ENCODE measurements at regions of chr6 and their contacts with region 1.

Region 1: GRCh38 chr6:139219271-139219729 is 72.5 kb downstream of the TXLNB start:
- DNase-seq: peak; percentile 75
- CTCF ChIP-seq: peak; percentile 89

Region 2: DNA sequence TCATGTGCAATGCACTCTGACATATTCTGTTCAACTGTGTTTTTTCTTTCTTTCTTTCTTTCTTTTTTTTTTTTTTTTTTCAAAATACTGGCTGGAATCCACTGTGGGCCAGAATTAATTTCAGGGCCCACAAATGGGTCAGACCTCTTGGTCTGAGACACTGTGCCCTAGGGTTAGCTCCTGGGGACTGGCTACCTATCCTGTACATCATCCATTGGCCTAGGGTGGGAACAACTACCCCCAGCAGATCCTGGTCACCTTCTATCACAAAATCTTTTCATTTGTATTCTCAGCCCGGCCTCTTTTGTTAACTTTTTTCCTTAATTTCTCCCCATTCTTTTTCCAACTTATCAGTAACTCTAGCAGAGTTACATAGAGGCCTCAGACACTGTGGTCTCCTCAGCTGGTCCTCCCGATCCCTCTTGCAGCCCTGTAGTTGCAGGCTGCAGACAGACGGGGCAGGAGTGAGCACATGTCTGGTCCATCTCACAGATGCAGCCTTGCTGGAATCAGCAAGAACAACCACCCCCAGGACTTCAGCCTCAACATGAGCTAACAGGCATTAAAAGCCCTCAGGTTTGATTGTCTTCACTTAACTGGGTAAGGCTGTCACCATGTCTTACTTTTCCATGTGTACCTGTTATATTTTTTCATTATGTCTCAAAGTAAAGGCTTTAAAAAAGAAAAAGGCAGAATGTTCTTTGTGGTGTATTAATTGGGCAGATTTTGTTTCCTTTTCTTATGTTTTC is 31.2 kb after region 1 on chr6:
- CTCF ChIA-PET with region 1: interaction called, 11 read pairs
- POLR2A ChIA-PET with region 1: no interaction called
- DNase-seq: peak; percentile 69
- CTCF ChIP-seq: peak; percentile 72

Region 3: DNA sequence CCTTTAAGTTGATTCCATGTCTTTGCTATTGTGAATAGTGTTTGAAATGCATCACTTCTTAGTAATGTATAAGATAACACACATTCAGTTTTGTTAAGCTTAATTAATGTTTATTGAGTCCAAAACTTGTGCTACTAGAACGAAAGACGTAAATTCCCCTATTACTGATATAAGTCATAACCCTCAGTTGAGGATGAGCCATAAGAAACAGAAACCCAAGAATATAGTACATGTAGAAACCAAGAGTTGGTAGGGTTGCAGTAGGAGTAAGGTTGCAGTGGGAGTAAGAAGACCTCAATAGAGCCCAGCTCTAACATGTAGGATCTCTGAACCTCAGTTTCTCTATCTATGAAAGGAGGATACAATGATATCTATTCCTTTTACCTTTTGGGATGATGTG is 135.9 kb after region 1 on chr6:
- CTCF ChIA-PET with region 1: interaction called, 24 read pairs
- POLR2A ChIA-PET with region 1: no interaction called
- DNase-seq: no peak
- CTCF ChIP-seq: no peak

Region 4: DNA sequence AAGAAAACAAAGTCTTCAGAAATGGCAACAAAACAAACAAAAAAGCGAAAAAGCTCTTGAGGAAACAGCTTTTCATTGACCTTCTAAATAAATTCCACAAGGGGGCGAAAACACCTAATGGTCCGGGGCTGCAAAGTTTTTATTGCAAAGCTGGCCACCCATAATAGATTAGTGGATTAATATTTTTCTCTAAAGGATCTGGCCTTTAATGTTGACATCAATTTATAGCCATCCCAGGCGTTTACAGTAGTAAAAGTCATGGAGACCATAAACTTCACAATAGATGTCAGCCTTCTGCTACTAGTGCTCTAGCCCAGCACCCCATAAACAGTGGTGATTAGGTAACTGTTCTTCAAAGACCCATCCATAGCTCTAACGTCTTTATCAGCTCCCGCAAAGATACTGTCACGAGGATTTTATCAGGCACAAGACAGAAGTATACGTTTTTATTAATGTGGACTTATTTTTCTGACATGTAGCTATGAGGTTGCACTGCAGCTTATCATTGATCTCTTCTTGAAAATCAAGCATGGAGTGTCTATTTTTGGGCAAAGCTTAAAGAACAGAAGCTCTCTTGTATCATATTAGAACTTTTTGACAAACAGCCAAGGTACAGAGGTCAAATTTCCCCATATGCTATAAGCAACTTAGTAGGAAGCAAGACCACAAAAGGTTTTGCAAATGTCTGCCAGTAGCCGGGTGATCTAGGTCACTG is 150.4 kb after region 1 on chr6:
- CTCF ChIA-PET with region 1: interaction called, 53 read pairs
- POLR2A ChIA-PET with region 1: no interaction called
- DNase-seq: peak; percentile 33
- CTCF ChIP-seq: peak; percentile 57

Region 5: GRCh38 chr6:139392794-139393193 is 173.5 kb after region 1 on chr6:
- CTCF ChIA-PET with region 1: no interaction called
- POLR2A ChIA-PET with region 1: no interaction called
- DNase-seq: peak; percentile 63
- CTCF ChIP-seq: no peak

Measured in GM10248 (cell line).